Right ventricle myocardium inferior (tissue), 1 donor: ENCODE measurements at regions of chr3 and their contacts with region 1.

Region 1: GRCh38 chr3:42012935-42013690 is 51.2 kb upstream of the ULK4 start:
- DNase-seq: peak; percentile 91
- ATAC-seq: peak; percentile 83

Region 2: DNA sequence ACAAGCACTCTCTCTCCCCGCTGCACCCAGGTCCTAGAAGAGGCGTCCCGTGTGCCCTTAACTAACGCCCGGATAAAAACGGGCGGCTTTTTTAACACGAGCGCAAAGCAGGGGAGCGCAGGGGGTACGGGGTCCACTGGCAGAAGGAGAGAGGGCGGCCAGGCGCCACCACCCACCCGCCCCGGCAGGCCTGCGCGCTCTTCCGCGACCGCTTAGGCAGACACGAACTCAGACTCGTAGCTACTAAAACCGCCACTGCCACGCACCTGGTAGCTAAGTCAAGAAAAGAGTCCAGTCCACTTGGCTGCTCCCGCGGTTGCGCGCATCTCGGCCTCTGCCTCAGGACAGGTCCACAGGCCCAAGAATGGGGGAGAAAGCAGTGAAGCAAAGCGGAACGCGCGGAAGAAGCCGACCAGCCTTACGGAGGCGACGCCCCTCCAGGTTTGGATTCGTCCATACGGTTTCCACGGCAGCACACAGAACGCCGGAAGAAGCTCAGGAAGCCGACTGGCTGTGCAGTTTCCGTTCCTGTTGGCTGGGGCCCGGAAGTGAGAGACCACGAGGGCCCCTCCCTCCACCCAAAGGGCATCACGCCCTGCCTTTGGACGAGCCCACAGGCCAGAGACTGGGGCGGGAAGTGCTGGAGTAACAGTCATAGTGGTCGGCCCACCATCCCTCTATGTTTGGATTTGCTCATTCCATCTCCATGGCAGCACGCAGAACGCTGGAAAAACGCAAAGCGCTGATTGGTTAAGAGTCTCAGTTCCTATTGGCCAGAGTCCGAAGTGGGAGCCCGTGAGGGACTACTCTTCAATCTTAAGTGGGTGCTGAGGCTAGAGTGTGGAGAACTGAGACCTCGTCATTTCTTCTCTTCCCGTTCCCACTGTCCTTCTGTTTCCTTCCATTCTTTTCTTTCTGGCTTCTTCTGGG is 51.1 kb before region 1 on chr3 and contains the start of gene ULK4:
- intact Hi-C with region 1: loop called (anchors 1 kb)
- DNase-seq: peak; percentile 98
- ATAC-seq: peak; percentile 98
- total RNA-seq, gene ULK4: 4.6 TPM

Region 3: GRCh38 chr3:42036483-42036823 is 23.3 kb after region 1 on chr3:
- intact Hi-C with region 1: loop called (anchors 2 kb)
- DNase-seq: no peak
- ATAC-seq: peak; percentile 91

Region 4: DNA sequence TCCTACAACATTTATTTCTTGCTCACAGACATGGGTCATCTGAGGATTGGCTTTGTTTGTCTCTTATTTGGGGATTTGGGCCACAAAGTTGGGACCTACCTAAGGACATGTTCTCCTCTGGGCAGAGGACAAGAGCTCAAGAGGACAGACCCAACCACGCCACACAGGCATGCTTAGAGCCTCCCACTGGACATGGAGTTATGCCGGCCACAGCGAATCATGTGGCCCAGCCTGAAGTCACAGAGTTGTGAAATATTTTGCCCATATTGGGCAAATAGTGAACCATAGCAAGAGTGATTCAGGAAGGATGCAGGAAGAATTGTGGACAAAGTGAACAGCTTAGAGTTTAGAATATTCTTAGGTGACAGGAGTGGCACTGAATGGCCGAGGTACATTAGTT is 87.9 kb after region 1 on chr3:
- intact Hi-C with region 1: loop called (anchors 1 kb)
- DNase-seq: peak; percentile 84
- ATAC-seq: peak; percentile 79

Region 5: GRCh38 chr3:42184651-42185443 is 171.7 kb after region 1 on chr3:
- intact Hi-C with region 1: loop called (anchors 10 kb)
- DNase-seq: no peak
- ATAC-seq: no peak